Posterior vena cava (tissue), 2 donors: ENCODE measurements at regions of chr9 and their contacts with region 1.

Region 1: GRCh38 chr9:117290856-117291622 is 123.8 kb downstream of the ASTN2 start:
- DNase-seq: no peak

Region 2: DNA sequence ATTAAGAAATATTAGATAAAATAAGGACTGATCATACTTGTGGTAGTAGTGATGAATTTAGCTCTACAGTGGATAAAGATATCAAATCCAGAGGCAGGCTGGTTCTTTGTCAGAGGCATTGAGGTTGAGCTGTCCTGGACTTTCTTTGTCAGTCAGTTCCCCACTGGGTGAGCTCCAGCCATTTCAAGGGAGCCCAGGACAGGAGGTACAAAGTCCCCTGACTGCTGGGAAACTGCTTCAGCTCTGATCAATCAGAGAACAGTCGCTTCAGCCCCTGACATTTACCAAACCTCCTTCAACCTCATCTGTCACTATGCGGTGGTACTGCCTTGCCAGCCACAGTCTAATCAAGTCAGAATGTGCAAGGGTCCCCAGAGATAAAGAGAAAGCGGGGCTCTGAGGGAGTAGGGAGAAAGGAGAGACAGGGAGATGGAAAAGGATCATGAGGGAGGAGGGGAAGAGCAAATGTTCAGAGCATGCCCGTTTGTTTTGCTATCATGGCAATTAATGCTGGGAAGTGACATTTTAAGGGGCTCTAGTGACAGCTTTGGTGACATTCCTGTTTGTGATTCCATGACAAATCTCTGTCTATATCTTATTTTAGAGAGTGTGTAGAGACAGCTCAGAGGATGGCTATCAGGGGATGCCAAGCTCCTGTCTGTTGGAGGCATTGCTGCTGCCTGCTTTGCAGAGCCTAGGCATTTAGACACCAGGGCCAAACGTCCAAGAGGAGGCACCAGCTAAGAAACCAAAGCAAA is 99.4 kb before region 1 on chr9:
- intact Hi-C with region 1: no loop called
- DNase-seq: no peak

Region 3: GRCh38 chr9:117278471-117279035 is 12.5 kb before region 1 on chr9:
- intact Hi-C with region 1: loop called in 1 of 2 experiments (anchors 1 kb)
- DNase-seq: no peak